BJ (cell line): ENCODE measurements at regions of chr6 and their contacts with region 1.

Region 1: GRCh38 chr6:134822920-134823709 is 126.8 kb downstream of the ALDH8A1 start:
- DNase-seq: no peak
- H3K4me3 ChIP-seq: no peak overlapping the region
- H3K27me3 ChIP-seq: no peaks in the 10 kb centered on the region
- CTCF ChIP-seq: peak; percentile 84

Region 2: DNA sequence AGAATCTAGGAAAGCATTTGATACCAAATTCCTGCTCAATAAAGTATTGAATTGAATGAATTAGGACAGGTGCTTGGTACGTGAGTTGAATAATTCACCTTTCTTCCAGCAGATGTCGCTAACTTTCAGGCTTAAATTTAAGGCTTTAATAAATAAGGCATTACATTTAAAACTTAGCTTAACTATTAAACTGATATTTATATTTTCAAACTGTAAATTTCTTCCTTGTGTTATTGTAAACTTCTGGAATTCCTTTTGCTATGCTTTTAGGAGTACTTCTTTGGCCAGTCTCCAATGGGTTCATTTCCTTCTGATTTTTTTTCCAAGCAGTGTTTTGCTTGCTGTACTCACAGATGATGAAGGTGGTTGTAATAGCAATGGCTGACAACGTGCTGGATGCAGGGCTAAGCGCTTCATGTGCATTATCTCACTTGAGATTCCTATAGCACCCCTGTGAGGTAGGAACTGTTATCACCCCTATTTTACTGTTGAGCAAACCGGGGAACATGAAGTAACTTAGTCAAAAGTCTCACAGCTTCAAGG is 699.4 kb before region 1 on chr6:
- CTCF ChIA-PET with region 1: interaction called, 10 read pairs
- POLR2A ChIA-PET with region 1: no interaction called
- DNase-seq: peak; percentile 30
- H3K4me3 ChIP-seq: no peak overlapping the region
- H3K27me3 ChIP-seq: no peaks in the 10 kb centered on the region
- CTCF ChIP-seq: peak; percentile 63

Region 3: GRCh38 chr6:134161036-134161435 is 662.1 kb before region 1 on chr6:
- CTCF ChIA-PET with region 1: interaction called, 23 read pairs
- POLR2A ChIA-PET with region 1: interaction called, 15 read pairs
- DNase-seq: peak; percentile 46
- H3K4me3 ChIP-seq: no peak overlapping the region
- H3K27me3 ChIP-seq: no peaks in the 10 kb centered on the region
- CTCF ChIP-seq: no peak

Region 4: DNA sequence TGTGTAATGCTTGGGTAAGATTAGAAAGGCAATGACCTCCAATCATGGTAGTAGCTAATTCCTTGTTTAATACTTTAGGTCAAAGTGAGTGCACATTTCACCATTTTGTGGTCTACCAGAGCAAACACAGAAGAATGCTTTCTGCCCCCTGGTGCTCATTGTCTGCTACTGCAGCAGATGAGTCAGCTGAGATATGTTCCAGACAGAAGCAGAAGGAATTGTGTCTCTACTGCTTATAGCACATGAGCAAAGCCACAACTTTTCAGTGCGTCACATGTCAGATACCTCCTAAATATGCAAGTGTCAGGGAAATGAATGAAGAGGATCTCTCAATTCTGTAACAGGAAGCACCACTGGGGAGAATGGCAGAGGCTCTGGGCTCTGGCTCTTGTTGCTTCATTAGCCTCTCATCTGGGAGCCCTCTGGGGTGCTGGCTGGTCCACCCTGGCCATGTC is 182.1 kb before region 1 on chr6:
- CTCF ChIA-PET with region 1: interaction called, 22 read pairs
- POLR2A ChIA-PET with region 1: no interaction called
- DNase-seq: peak; percentile 66
- H3K4me3 ChIP-seq: no peak overlapping the region
- H3K27me3 ChIP-seq: no peaks in the 10 kb centered on the region
- CTCF ChIP-seq: peak; percentile 91

Region 5: DNA sequence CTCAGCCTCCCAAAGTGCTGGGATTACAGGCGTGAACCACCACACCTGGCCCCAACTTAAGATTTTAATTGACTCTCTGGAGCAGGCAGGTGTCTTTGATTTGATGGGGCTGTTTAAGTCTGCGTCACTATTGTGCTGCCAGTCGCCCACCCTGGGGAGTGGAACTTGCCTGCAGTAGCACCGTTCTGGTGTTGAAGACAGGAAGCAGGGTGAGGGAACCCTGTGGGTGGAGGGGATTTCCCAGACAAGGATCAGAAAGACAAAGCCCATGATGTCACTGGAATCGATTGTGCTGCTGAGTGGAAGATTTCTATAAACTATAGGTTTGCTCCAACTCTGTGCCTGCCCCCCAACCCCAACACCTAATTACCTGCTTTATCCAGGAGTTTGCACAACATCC is 115.8 kb after region 1 on chr6:
- CTCF ChIA-PET with region 1: interaction called, 19 read pairs
- POLR2A ChIA-PET with region 1: no interaction called
- DNase-seq: no peak
- H3K4me3 ChIP-seq: no peak overlapping the region
- H3K27me3 ChIP-seq: no peaks in the 10 kb centered on the region
- CTCF ChIP-seq: no peak

Region 6: GRCh38 chr6:135149376-135149775 is 326.3 kb after region 1 on chr6:
- CTCF ChIA-PET with region 1: no interaction called
- POLR2A ChIA-PET with region 1: no interaction called
- DNase-seq: no peak
- H3K4me3 ChIP-seq: no peak overlapping the region
- H3K27me3 ChIP-seq: no peaks in the 10 kb centered on the region
- CTCF ChIP-seq: no peak